ENCODE measurements at regions of chr15 and their contacts with region 1.

Region 1: DNA sequence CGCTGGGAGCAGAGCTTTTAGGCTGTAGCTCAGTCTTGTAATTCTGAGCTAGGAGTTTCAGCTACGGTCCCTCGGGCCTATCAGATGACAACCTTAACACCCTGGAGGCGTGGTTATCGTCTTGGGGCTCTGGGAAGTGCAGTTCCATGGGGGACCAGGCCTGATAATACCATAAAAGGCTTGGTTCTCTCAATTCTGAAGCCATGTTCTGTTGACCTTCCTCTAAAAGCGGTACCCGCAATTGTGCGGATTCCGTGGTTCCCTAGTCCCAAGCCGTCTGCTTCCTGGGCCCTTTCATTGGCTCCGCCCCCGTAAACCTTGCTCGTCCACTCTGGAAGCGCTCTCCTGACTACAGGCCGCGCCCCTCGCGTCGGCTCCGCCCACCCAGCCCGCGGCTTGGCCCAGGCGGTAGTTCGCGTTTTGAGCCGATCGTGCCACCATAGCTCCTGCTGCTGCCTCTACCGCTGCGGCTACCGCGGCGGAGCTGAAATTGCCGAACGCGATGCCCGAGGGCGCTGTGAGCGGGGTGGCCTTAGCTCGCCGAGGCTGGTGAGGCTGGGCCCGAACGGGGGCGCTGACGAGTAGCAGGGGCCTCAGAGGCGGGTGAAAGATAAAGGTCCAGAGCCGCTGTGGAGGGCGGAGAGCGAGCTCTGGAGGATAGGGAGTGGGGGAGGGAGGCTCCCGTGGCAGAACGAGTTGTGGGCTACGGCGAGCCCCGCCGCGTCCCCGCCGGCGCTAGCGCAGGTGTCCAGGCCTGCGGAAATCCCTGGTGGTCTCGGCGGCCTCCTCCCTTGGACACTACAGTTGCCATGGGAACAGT is at the start of gene MAPKBP1:
- DNase-seq: peak; percentile 99
- ATAC-seq: peak; percentile 91
- H3K4me3 ChIP-seq: peak within 1 kb of the TSS; percentile 75 to 87 (median 78)
- H3K4me3 Mint-ChIP-seq: peak within 1 kb of the TSS; percentile 99
- H3K27ac ChIP-seq: peak within 1 kb of the TSS; percentile 62 to 71
- H3K27ac Mint-ChIP-seq: peak within 1 kb of the TSS; percentile 96
- H3K4me1 ChIP-seq: peaks cover 30 to 32% of the 10 kb centered on the region in 2 donors
- H3K4me1 Mint-ChIP-seq: peaks cover 57% of the 10 kb centered on the region
- H3K27me3 ChIP-seq: no peaks in the 10 kb centered on the region
- H3K27me3 Mint-ChIP-seq: no peaks in the 10 kb centered on the region
- CTCF ChIP-seq: peak; percentile 83
- total RNA-seq, gene MAPKBP1: 59.2 and 65.5 TPM in 2 replicates

Region 2: GRCh38 chr15:41465822-41466421 is 308.4 kb before region 1 on chr15:
- CTCF ChIA-PET with region 1: interaction called, 12 read pairs
- POLR2A ChIA-PET with region 1: no interaction called
- intact Hi-C with region 1: no loop called
- DNase-seq: peak; percentile 60
- ATAC-seq: peak; percentile 54
- H3K4me3 ChIP-seq: no peak overlapping the region
- H3K4me3 Mint-ChIP-seq: no peak overlapping the region
- H3K27ac ChIP-seq: no peak overlapping the region
- H3K27ac Mint-ChIP-seq: no peak overlapping the region
- H3K4me1 ChIP-seq: no peaks in the 10 kb centered on the region
- H3K4me1 Mint-ChIP-seq: peaks cover 5% of the 10 kb centered on the region
- H3K27me3 ChIP-seq: no peaks in the 10 kb centered on the region
- H3K27me3 Mint-ChIP-seq: no peaks in the 10 kb centered on the region
- CTCF ChIP-seq: peak; percentile 95

Region 3: GRCh38 chr15:41483115-41483514 is 291.2 kb before region 1 on chr15:
- CTCF ChIA-PET with region 1: no interaction called
- POLR2A ChIA-PET with region 1: no interaction called
- intact Hi-C with region 1: no loop called
- DNase-seq: peak; percentile 53
- ATAC-seq: peak; percentile 85
- H3K4me3 ChIP-seq: peak overlapping the region in 2 of 5 experiments; percentile 5 to 15
- H3K4me3 Mint-ChIP-seq: peak overlapping the region; percentile 44
- H3K27ac ChIP-seq: peak overlapping the region; percentile 27 to 53
- H3K27ac Mint-ChIP-seq: peak overlapping the region; percentile 75
- H3K4me1 ChIP-seq: peaks cover 14 to 16% of the 10 kb centered on the region in 2 donors
- H3K4me1 Mint-ChIP-seq: peaks cover 16% of the 10 kb centered on the region
- H3K27me3 ChIP-seq: no peaks in the 10 kb centered on the region
- H3K27me3 Mint-ChIP-seq: peaks cover 4% of the 10 kb centered on the region
- CTCF ChIP-seq: no peak

Region 4: GRCh38 chr15:41660235-41661077 is 113.8 kb before region 1 on chr15 and contains the start of gene MGA:
- CTCF ChIA-PET with region 1: interaction called, 10 read pairs
- POLR2A ChIA-PET with region 1: interaction called, 7 read pairs
- intact Hi-C with region 1: loop called (anchors 1 kb)
- DNase-seq: peak; percentile 98
- ATAC-seq: peak; percentile 80
- H3K4me3 ChIP-seq: peak within 1 kb of the TSS; percentile 58 to 72 (median 63)
- H3K4me3 Mint-ChIP-seq: peak within 1 kb of the TSS; percentile 89
- H3K27ac ChIP-seq: peak within 1 kb of the TSS; percentile 94 to 95
- H3K27ac Mint-ChIP-seq: peak within 1 kb of the TSS; percentile 96
- H3K4me1 ChIP-seq: peaks cover 26 to 28% of the 10 kb centered on the region in 2 donors
- H3K4me1 Mint-ChIP-seq: peaks cover 44% of the 10 kb centered on the region
- H3K27me3 ChIP-seq: no peaks in the 10 kb centered on the region
- H3K27me3 Mint-ChIP-seq: no peaks in the 10 kb centered on the region
- CTCF ChIP-seq: no peak
- total RNA-seq, gene MGA: 77.2 and 79.7 TPM in 2 replicates

Region 5: DNA sequence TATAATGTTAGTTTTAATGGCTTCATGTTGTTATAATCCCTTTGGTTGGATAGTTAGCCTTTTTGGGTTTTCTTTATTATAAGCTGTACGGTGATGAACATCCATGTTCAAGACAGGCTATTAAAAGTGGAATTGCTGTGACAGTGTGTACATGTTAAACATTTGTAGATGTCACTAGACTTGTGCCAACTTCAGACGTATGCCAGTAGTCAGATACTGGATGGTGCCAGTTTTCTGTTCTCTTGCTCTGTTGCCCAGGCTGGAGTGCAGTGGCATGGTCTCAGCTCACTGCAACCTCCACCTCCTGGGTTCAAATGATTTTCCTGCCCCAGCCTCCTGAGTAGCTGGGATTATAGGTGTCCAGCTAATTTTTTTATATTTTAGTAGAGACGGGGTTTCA is 60.0 kb before region 1 on chr15:
- CTCF ChIA-PET with region 1: no interaction called
- POLR2A ChIA-PET with region 1: no interaction called
- intact Hi-C with region 1: no loop called
- DNase-seq: no peak
- ATAC-seq: no peak
- H3K4me3 ChIP-seq: no peak overlapping the region
- H3K4me3 Mint-ChIP-seq: no peak overlapping the region
- H3K27ac ChIP-seq: no peak overlapping the region
- H3K27ac Mint-ChIP-seq: no peak overlapping the region
- H3K4me1 ChIP-seq: no peaks in the 10 kb centered on the region
- H3K4me1 Mint-ChIP-seq: no peaks in the 10 kb centered on the region
- H3K27me3 ChIP-seq: no peaks in the 10 kb centered on the region
- H3K27me3 Mint-ChIP-seq: no peaks in the 10 kb centered on the region
- CTCF ChIP-seq: no peak

Region 6: GRCh38 chr15:41746802-41747201 is 27.5 kb before region 1 on chr15:
- CTCF ChIA-PET with region 1: no interaction called
- POLR2A ChIA-PET with region 1: no interaction called
- intact Hi-C with region 1: no loop called
- DNase-seq: no peak
- ATAC-seq: no peak
- H3K4me3 ChIP-seq: no peak overlapping the region
- H3K4me3 Mint-ChIP-seq: no peak overlapping the region
- H3K27ac ChIP-seq: no peak overlapping the region
- H3K27ac Mint-ChIP-seq: no peak overlapping the region
- H3K4me1 ChIP-seq: no peaks in the 10 kb centered on the region
- H3K4me1 Mint-ChIP-seq: no peaks in the 10 kb centered on the region
- H3K27me3 ChIP-seq: no peaks in the 10 kb centered on the region
- H3K27me3 Mint-ChIP-seq: no peaks in the 10 kb centered on the region
- CTCF ChIP-seq: no peak

Region 7: GRCh38 chr15:41811432-41812195 is 37.3 kb after region 1 on chr15:
- CTCF ChIA-PET with region 1: interaction called, 716 read pairs
- POLR2A ChIA-PET with region 1: interaction called, 14 read pairs
- intact Hi-C with region 1: loop called (anchors 1 kb)
- DNase-seq: peak; percentile 82
- ATAC-seq: peak; percentile 92
- H3K4me3 ChIP-seq: no peak overlapping the region
- H3K4me3 Mint-ChIP-seq: no peak overlapping the region
- H3K27ac ChIP-seq: no peak overlapping the region
- H3K27ac Mint-ChIP-seq: no peak overlapping the region
- H3K4me1 ChIP-seq: peaks cover 5 to 20% of the 10 kb centered on the region in 2 donors
- H3K4me1 Mint-ChIP-seq: peaks cover 10% of the 10 kb centered on the region
- H3K27me3 ChIP-seq: no peaks in the 10 kb centered on the region
- H3K27me3 Mint-ChIP-seq: no peaks in the 10 kb centered on the region
- CTCF ChIP-seq: peak; percentile 88

Region 8: DNA sequence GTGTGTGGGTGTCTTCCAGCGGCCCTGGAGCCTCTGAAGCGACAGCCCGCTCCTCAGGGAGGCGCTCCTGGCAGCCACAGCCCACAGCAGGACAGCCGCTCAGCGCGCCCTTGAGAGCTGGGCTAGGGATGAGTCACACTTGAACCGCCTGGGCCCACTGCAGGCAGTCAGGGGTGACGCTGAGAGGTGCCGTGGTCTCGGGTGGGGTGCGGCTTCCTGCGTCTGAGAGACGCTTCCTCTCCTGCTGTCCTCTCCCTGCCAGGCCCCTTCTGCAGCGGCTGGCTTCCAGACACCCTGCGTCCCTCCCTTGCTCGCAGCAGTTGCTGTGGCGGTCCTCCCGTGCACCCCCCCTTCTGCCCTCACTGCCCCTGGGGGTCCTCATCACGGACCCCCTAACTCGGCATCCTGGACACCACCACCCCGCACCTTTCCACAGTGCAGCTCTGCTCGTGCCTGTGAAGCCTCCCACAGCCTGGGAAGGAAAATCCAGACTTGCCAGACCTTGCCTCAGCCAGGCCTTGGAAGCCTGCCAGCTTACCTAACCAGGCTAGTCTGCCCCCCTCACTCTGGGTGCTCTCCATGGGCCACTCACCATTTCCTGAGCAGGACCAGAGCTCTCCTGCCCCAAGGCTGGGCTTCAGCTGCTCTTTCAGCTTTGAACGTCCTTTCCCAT is 120.7 kb after region 1 on chr15:
- CTCF ChIA-PET with region 1: interaction called, 257 read pairs
- POLR2A ChIA-PET with region 1: interaction called, 6 read pairs
- intact Hi-C with region 1: loop called (anchors 2 kb)
- DNase-seq: peak; percentile 84
- ATAC-seq: peak; percentile 98
- H3K4me3 ChIP-seq: peak overlapping the region in 4 of 5 experiments; percentile 10 to 47 (median 30)
- H3K4me3 Mint-ChIP-seq: peak overlapping the region; percentile 84
- H3K27ac ChIP-seq: peak overlapping the region; percentile 71 to 80
- H3K27ac Mint-ChIP-seq: peak overlapping the region; percentile 97
- H3K4me1 ChIP-seq: peaks cover 37 to 41% of the 10 kb centered on the region in 2 donors
- H3K4me1 Mint-ChIP-seq: peaks cover 40% of the 10 kb centered on the region
- H3K27me3 ChIP-seq: no peaks in the 10 kb centered on the region
- H3K27me3 Mint-ChIP-seq: no peaks in the 10 kb centered on the region
- CTCF ChIP-seq: no peak

Region 9: GRCh38 chr15:41972253-41973242 is 198.3 kb after region 1 on chr15 and contains the start of gene EHD4:
- CTCF ChIA-PET with region 1: interaction called, 7 read pairs
- POLR2A ChIA-PET with region 1: no interaction called
- intact Hi-C with region 1: loop called (anchors 1 kb)
- DNase-seq: peak; percentile 95
- ATAC-seq: peak; percentile 87
- H3K4me3 ChIP-seq: peak within 1 kb of the TSS; percentile 62 to 95 (median 83)
- H3K4me3 Mint-ChIP-seq: peak within 1 kb of the TSS; percentile 90
- H3K27ac ChIP-seq: peak within 1 kb of the TSS; percentile 71 to 84
- H3K27ac Mint-ChIP-seq: peak within 1 kb of the TSS; percentile 95
- H3K4me1 ChIP-seq: peaks cover 42 to 43% of the 10 kb centered on the region in 2 donors
- H3K4me1 Mint-ChIP-seq: peaks cover 47% of the 10 kb centered on the region
- H3K27me3 ChIP-seq: no peaks in the 10 kb centered on the region
- H3K27me3 Mint-ChIP-seq: peaks cover 16% of the 10 kb centered on the region
- CTCF ChIP-seq: no peak
- total RNA-seq, gene EHD4: 12.7 and 13.4 TPM in 2 replicates